A549 (cell line): ENCODE measurements at regions of chr11 and their contacts with region 1.

Region 1: GRCh38 chr11:3091791-3092602 is 34.8 kb upstream of the CARS1 start:
- DNase-seq: peak; percentile 83 to 89
- ATAC-seq: peak; percentile 78 to 93
- H3K4me3 ChIP-seq: no peak overlapping the region
- H3K27ac ChIP-seq: no peak overlapping the region
- H3K4me1 ChIP-seq: no peaks in the 10 kb centered on the region
- CTCF ChIP-seq: peak; percentile 96
- EP300 ChIP-seq: no peak
- POLR2A ChIP-seq: no peak
- RAD21 ChIP-seq: peak; percentile 90 to 92

Region 2: DNA sequence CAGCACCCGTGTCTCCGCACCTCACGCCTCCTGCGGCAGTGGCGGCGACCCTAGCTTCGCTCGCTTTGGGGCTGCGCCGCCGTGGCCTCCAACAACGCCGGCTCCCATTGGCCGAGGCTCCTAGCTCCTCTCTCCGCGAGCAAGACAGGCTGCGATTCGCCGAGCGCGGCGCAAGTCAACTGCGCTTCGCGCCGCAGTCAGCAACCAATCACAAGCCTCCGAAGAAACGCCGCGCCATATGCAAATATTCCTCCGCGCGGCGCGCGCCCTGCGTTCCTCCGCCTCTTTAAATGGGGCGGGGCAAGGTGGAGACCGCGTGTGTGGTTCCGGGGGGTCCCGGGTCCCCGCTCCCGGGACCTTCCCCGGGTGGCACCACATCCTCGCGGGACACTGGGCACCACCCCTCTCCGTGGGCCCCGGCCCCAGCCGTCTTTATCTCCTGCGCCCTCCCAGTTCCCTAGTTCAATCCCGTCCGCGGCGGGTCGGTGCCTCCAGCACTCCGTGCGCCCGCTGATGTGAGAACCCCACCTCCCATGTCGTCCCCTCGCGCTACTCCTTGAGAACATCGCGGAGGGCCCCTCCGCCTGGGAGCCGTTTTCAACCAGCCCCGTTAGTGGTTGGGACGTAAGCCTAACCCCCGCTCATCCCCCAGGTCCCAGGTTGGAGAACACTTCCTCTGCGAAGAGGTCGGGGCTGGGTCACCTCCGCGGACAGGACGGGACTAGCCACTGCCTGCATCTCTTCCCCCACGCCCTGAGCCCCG is 99.6 kb before region 1 on chr11 and contains the start of gene NAP1L4:
- CTCF ChIA-PET with region 1: interaction called, 10 read pairs
- POLR2A ChIA-PET with region 1: no interaction called
- DNase-seq: peak; percentile 98 to 100
- ATAC-seq: peak; percentile 90 to 93
- H3K4me3 ChIP-seq: peak within 1 kb of the TSS; percentile 68
- H3K27ac ChIP-seq: peak within 1 kb of the TSS; percentile 95 to 99
- H3K4me1 ChIP-seq: peaks cover 32% of the 10 kb centered on the region
- CTCF ChIP-seq: no peak
- EP300 ChIP-seq: no peak
- POLR2A ChIP-seq: peak; percentile 70
- RAD21 ChIP-seq: no peak
- polyA plus RNA-seq, gene NAP1L4: 128 and 148 TPM in 2 replicates

Region 3: GRCh38 chr11:3037040-3037944 is 54.7 kb before region 1 on chr11:
- CTCF ChIA-PET with region 1: interaction called, 210 read pairs
- POLR2A ChIA-PET with region 1: interaction called, 5 read pairs
- DNase-seq: peak; percentile 75 to 76
- ATAC-seq: peak; percentile 84 to 98
- H3K4me3 ChIP-seq: no peak overlapping the region
- H3K27ac ChIP-seq: no peak overlapping the region
- H3K4me1 ChIP-seq: no peaks in the 10 kb centered on the region
- CTCF ChIP-seq: peak; percentile 87
- EP300 ChIP-seq: no peak
- POLR2A ChIP-seq: no peak
- RAD21 ChIP-seq: peak; percentile 73 to 89

Region 4: GRCh38 chr11:3073029-3073435 is 19.0 kb before region 1 on chr11:
- CTCF ChIA-PET with region 1: interaction called, 87 read pairs
- POLR2A ChIA-PET with region 1: no interaction called
- DNase-seq: no peak
- ATAC-seq: no peak
- H3K4me3 ChIP-seq: no peak overlapping the region
- H3K27ac ChIP-seq: no peak overlapping the region
- H3K4me1 ChIP-seq: no peaks in the 10 kb centered on the region
- CTCF ChIP-seq: no peak
- EP300 ChIP-seq: no peak
- POLR2A ChIP-seq: no peak
- RAD21 ChIP-seq: no peak

Region 5: DNA sequence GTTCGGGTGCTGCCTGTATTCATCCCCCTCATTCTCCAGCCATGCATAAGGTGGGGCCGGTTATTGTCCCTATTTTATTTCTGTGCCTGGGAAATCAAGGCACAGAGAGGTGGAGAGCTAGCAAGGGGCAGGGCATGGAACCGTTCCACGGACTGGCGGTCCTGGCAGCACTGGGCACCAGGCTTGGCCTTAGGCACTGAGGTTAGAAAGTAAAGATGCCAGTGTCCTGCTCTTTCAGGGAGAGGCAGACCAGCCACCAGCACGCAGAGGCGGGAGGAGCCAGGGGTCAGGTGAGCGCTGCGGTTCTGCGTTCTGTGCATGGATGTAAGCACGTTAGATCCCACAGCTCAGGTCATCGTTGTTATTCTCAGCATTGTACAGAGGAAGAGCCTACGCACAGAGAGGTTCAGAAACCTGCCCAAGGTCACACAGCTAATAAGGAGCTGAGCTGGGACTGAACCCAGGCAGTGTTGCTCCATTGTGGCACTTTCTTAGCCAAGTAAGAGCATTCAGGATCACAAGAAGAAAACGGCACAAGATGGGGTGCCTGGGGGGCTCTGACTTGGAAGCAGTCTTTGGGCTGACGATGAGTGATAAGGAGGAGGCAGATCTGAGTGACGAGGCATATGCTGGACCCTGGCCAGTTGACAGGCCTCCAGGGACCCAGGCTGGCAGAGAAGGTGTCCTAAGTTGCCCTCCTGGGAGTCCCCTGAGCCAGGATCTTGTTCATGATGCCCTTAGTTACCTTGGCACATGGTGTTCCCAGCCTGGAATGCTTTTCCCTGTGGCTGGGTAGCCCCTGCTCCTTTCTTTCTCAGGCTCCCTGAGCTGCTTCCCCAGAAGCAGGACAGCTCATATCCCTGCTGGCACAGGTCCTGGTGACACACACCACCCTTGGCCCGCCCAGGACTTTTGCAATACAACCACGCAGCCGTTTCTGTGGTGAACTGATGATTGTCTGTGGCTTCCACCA is 32.0 kb after region 1 on chr11:
- CTCF ChIA-PET with region 1: interaction called, 17 read pairs
- POLR2A ChIA-PET with region 1: no interaction called
- DNase-seq: peak; percentile 48 to 70
- ATAC-seq: peak; percentile 85
- H3K4me3 ChIP-seq: no peak overlapping the region
- H3K27ac ChIP-seq: peak overlapping the region; percentile 49 to 65; a peak in 4 of 6 replicates
- H3K4me1 ChIP-seq: peaks cover 15% of the 10 kb centered on the region
- CTCF ChIP-seq: no peak
- EP300 ChIP-seq: no peak
- POLR2A ChIP-seq: no peak
- RAD21 ChIP-seq: no peak